ENCODE measurements at regions of chr4 and their contacts with region 1.

Region 1: GRCh38 chr4:153466081-153466948 is at the start of gene TMEM131L:
- DNase-seq: peak; percentile 67
- H3K4me3 Mint-ChIP-seq: peak within 1 kb of the TSS; percentile 95
- H3K27ac Mint-ChIP-seq: peak within 1 kb of the TSS; percentile 96
- H3K4me1 Mint-ChIP-seq: peaks cover 35% of the 10 kb centered on the region
- H3K27me3 Mint-ChIP-seq: no peaks in the 10 kb centered on the region
- total RNA-seq, gene TMEM131L: 37.6 to 41.6 TPM

Region 2: DNA sequence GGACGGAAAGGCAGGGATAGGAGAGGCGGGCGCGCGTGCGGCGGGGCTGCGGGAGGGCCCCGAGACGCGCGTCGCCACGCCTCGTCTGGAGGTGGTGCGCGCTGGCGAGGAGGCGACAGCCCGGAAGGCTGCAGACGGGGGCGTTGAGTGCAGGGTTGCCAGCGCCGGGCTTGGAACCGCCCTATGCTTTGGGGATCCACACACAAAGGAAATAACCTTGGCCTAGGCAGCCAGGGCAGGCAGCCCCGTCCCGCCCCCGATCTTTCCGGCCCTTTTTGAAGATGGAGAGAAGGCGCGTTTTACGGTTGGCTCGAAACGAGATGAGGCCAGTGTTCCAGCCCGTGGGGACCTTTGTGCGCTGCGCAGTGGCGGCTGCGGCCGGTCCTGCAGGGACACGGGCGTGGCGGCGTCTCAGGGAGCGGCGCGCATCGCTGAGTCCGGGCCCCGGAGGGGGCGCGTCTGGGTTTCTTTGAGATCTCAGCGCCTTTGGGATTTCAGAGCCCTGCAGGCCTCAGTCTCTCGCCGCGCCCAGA is 312.9 kb before region 1 on chr4:
- CTCF ChIA-PET with region 1: no interaction called
- intact Hi-C with region 1: loop called (anchors 2 kb)
- DNase-seq: peak; percentile 91
- H3K4me3 Mint-ChIP-seq: peak overlapping the region; percentile 80
- H3K27ac Mint-ChIP-seq: peak overlapping the region; percentile 86
- H3K4me1 Mint-ChIP-seq: peaks cover 58% of the 10 kb centered on the region
- H3K27me3 Mint-ChIP-seq: no peaks in the 10 kb centered on the region

Region 3: GRCh38 chr4:153450544-153450917 is 15.8 kb before region 1 on chr4:
- CTCF ChIA-PET with region 1: interaction called, 17 read pairs
- intact Hi-C with region 1: loop called (anchors 1 kb)
- DNase-seq: peak; percentile 42
- H3K4me3 Mint-ChIP-seq: peak overlapping the region; percentile 36
- H3K27ac Mint-ChIP-seq: peak overlapping the region; percentile 90
- H3K4me1 Mint-ChIP-seq: peaks cover 25% of the 10 kb centered on the region
- H3K27me3 Mint-ChIP-seq: no peaks in the 10 kb centered on the region

Region 4: GRCh38 chr4:153497988-153498967 is 32.0 kb after region 1 on chr4:
- CTCF ChIA-PET with region 1: interaction called, 16 read pairs
- intact Hi-C with region 1: loop called (anchors 1 kb)
- DNase-seq: peak; percentile 33
- H3K4me3 Mint-ChIP-seq: peak overlapping the region; percentile 70
- H3K27ac Mint-ChIP-seq: peak overlapping the region; percentile 98
- H3K4me1 Mint-ChIP-seq: peaks cover 91% of the 10 kb centered on the region
- H3K27me3 Mint-ChIP-seq: no peaks in the 10 kb centered on the region

Region 5: DNA sequence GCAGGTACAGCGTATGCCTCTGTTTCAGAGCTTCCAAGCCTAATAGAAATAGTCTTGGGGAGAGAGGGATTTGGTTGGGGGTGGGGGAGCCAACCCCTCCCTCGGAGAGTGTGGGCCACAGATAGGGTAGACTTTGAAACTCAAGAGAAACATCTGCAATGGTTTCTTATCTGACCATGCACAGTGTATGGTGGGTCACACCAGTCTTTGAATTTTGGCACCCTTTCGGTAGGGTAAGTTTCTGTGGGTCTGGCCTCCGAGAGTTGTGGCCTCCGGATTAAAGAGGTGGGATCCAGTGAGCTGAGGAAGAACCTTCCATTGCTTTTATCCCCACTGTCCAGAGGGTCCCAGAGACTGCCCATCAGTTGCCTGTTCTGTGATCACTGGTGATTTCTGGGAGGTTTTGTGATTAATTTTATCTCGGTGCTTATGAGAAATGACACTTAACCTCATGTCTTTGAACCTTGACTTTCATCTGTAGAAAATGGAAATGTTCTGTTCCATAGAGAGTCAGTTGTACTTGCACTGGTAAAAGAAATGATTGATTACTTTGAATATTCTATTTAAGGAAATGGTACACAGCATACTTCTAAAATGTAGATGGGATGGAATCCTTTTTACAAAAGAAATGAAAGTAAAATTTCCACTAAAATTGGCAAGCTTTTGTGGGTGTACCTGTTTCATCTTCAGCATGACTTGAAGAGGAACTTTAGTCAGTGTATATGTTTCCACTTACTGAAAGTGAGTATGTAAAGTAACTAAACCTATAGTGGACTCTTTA is 62.6 kb after region 1 on chr4:
- CTCF ChIA-PET with region 1: interaction called, 30 read pairs
- intact Hi-C with region 1: loop called (anchors 1 kb)
- DNase-seq: no peak
- H3K4me3 Mint-ChIP-seq: peak overlapping the region; percentile 60
- H3K27ac Mint-ChIP-seq: peak overlapping the region; percentile 97
- H3K4me1 Mint-ChIP-seq: peaks cover 91% of the 10 kb centered on the region
- H3K27me3 Mint-ChIP-seq: no peaks in the 10 kb centered on the region